ENCODE measurements at regions of chr2 and their contacts with region 1.

Region 1: GRCh38 chr2:69946351-69947077 is 14.9 kb downstream of the ASPRV1 start:
- DNase-seq: peak; percentile 66
- H3K4me3 Mint-ChIP-seq: peak overlapping the region; percentile 67
- H3K27ac Mint-ChIP-seq: peak overlapping the region; percentile 86
- H3K4me1 Mint-ChIP-seq: peaks cover 52% of the 10 kb centered on the region
- H3K27me3 Mint-ChIP-seq: peaks cover 5% of the 10 kb centered on the region

Region 2: GRCh38 chr2:69829256-69830046 is 117.1 kb before region 1 on chr2 and contains the start of gene GMCL1:
- intact Hi-C with region 1: no loop called
- DNase-seq: peak; percentile 99
- H3K4me3 Mint-ChIP-seq: peak within 1 kb of the TSS; percentile 98
- H3K27ac Mint-ChIP-seq: peak within 1 kb of the TSS; percentile 95
- H3K4me1 Mint-ChIP-seq: peaks cover 59% of the 10 kb centered on the region
- H3K27me3 Mint-ChIP-seq: no peaks in the 10 kb centered on the region
- total RNA-seq, gene GMCL1: 25.6 and 32.8 TPM in 2 replicates

Region 3: DNA sequence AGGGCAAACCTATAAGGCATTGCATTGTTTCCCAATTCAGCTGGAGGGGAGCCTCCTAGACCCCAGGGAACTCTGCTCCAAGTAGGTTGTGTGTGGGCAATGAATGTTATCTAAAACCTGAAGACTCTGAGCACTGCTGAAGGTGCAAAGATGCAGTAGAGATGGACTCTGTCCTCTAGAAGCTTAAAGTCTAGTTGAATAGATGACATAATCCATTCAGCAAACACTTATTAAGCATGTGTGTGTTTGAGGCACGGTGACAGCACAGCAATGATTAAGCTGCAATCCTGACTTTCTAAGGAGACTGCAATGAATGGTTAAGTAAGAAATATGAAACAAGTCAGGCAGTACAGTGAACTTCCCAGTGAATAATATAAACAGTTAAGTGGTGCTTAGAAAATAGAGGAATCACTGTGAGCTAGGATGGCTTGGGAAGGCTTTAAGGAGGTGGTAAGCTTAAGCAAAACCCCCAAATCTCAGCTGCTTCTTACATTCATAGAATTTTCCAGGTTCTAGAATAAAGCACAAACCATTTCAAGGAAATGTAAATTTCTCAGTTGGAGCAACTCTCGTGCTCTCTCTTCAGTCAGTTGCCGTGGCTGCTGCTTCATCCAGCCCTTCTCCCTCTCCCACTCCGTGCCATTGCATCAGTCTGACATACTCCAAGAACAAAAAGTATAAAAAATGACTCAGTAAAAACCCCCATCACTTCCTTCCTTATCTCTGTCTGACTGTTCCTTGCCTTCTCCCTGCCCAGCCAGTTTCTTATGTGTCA is 12.5 kb before region 1 on chr2:
- intact Hi-C with region 1: loop called (anchors 1 kb)
- DNase-seq: no peak
- H3K4me3 Mint-ChIP-seq: peak overlapping the region; percentile 1
- H3K27ac Mint-ChIP-seq: peak overlapping the region; percentile 75
- H3K4me1 Mint-ChIP-seq: peaks cover 41% of the 10 kb centered on the region
- H3K27me3 Mint-ChIP-seq: no peaks in the 10 kb centered on the region

Region 4: DNA sequence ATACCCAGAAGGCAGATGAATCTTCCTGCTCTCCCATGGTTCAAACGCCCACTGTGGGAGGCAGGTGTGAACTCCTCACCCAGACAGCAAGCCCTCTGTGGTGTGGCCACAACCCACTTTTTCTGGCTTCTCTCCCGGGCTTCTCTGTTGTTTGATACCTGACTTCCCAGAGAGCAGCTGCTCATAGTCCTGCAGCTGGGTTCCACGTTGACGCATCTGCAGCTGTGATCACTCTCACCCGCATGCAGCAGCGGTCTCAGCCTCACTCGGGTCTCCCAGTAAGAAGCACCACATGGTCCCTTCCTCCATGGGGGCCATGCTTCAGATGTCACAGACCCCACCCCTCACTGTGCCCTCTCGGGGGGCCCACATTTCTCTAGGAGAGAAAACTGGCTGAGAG is 11.5 kb after region 1 on chr2:
- intact Hi-C with region 1: no loop called
- DNase-seq: no peak
- H3K4me3 Mint-ChIP-seq: no peak overlapping the region
- H3K27ac Mint-ChIP-seq: no peak overlapping the region
- H3K4me1 Mint-ChIP-seq: peaks cover 18% of the 10 kb centered on the region
- H3K27me3 Mint-ChIP-seq: peaks cover 21% of the 10 kb centered on the region

Region 5: DNA sequence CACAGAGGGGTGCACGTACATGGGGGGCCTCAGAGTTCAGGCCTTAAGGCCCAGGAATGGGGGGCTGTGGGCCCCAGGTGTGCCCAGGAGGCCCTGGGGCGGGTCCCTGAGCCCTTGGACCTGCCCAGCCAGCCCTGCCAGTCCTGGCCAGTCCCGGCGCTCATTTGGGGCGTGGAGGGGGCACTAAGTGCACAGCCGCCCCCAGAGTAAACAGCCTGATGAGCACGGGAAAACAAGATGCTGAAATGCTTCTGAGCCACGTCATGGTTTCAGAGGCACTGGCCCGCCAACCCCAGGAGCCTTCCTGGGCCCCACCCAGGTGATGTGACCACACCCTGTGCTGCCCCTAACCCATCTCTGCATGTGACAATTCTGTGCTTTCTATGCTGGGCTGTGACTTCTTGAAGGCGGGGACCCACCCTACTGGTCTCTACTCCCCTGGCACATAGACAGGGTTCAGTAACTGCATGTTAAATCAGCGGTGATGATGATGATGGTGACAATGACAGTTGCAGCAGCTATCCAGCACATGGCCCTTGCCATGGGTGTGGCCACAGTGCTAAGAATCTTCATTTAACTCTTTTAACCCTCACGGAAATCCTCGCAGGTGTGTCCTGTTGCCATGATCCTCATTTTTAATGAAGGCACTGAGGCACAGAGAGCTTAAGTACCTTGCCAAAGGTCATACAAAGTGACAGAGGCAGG is 43.1 kb after region 1 on chr2:
- intact Hi-C with region 1: loop called (anchors 2 kb)
- DNase-seq: no peak
- H3K4me3 Mint-ChIP-seq: no peak overlapping the region
- H3K27ac Mint-ChIP-seq: no peak overlapping the region
- H3K4me1 Mint-ChIP-seq: peaks cover 12% of the 10 kb centered on the region
- H3K27me3 Mint-ChIP-seq: no peaks in the 10 kb centered on the region

Region 6: GRCh38 chr2:70014959-70015358 is 68.4 kb after region 1 on chr2:
- intact Hi-C with region 1: no loop called
- DNase-seq: no peak
- H3K4me3 Mint-ChIP-seq: no peak overlapping the region
- H3K27ac Mint-ChIP-seq: peak overlapping the region; percentile 4
- H3K4me1 Mint-ChIP-seq: peaks cover 35% of the 10 kb centered on the region
- H3K27me3 Mint-ChIP-seq: no peaks in the 10 kb centered on the region

Measured in activated T-helper 1 cell treated with anti-CD3 and anti-CD28 coated beads, Interleukin-12 subunit alpha, Interleukin-12 subunit beta, Interleukin-2, Interleukin-4 antibody, amounts not matched to agents 30 ng/mL and 10 ng/mL and 1 ng/mL, durations not matched to agents 14 hours and 24 hours and 36 hours (primary cell).